GM10248 (cell line): ENCODE measurements at regions of chr17 and their contacts with region 1.

Region 1: GRCh38 chr17:28726226-28727130 is at the start of gene TLCD1:
- DNase-seq: peak; percentile 82
- CTCF ChIP-seq: peak; percentile 97

Region 2: GRCh38 chr17:28750178-28751047 is 23.9 kb after region 1 on chr17:
- CTCF ChIA-PET with region 1: interaction called, 472 read pairs
- POLR2A ChIA-PET with region 1: interaction called, 90 read pairs
- DNase-seq: peak; percentile 84
- CTCF ChIP-seq: peak; percentile 100

Region 3: DNA sequence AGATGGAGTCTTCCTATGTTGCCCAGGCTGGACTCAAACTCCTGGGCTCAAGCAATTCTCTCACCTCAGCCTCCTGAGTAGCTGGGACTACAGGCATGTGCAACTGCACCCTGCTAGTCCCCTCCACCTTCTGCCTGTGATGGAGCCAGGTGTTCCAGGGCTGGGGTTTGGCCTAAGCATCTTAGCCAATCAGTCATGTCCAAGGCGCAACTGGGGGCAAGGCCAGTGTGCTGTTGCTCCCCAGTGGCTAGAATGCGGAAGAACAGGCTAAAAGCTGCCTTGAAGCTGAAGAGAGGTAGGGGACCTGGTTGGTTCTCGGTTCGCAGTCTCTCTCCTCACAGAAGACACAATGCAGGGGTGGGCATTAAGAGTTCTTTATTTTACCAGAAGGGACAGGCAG is 152.5 kb after region 1 on chr17:
- CTCF ChIA-PET with region 1: interaction called, 15 read pairs
- POLR2A ChIA-PET with region 1: interaction called, 10 read pairs
- DNase-seq: peak; percentile 70
- CTCF ChIP-seq: peak; percentile 56

Region 4: DNA sequence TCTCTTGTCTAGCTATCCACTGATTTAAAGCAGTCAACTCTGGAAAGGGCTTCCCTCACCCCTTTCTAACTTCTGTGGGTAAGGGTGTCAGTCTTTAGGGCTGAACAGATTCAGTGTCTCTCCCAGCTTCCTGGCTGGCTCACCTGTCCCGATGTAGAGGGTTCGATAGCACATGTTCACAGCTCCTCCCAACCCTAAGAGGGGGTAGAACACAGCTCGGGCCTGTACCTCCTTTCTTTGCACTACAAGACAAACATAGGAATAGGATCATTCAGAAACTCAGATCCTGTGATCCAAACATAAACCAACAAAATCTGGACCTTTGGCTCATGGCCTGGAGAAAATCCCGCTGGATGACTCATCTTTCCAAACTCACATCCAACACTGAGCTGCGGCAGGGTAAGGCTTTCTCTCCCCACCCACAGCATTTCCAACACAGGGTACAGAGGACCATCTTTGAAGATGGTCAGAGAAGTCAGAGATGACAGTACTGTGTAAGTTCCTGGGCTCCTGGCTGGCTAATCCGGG is 182.2 kb after region 1 on chr17:
- CTCF ChIA-PET with region 1: interaction called, 37 read pairs
- POLR2A ChIA-PET with region 1: interaction called, 5 read pairs
- DNase-seq: no peak
- CTCF ChIP-seq: no peak

Region 5: GRCh38 chr17:29111816-29112499 is 385.5 kb after region 1 on chr17:
- CTCF ChIA-PET with region 1: interaction called, 20 read pairs
- POLR2A ChIA-PET with region 1: no interaction called
- DNase-seq: peak; percentile 76
- CTCF ChIP-seq: peak; percentile 92

Region 6: DNA sequence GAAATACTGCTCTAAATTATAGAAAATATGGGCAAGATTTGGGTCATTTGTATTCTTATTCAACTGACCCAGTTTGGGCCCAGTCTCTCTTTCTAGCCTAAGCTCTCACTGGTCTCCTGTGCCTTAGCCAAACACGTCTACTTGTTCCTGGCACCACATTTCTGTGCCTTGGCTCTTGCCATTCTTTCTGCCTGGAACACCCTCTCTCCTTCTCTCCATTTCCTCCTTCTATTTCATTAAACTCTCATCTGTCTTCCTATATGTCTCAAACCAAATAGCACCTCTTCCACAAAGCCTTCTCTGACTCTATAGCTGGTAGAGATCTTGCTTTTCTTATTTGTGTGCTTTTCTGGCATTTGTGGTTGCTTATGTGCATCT is 605.2 kb after region 1 on chr17:
- CTCF ChIA-PET with region 1: no interaction called
- POLR2A ChIA-PET with region 1: no interaction called
- DNase-seq: no peak
- CTCF ChIP-seq: no peak